IMR-90 (cell line): ENCODE measurements at regions of chr10 and their contacts with region 1.

Region 1: GRCh38 chr10:73339436-73339835 is 19.2 kb downstream of the CFAP70 start:
- DNase-seq: no peak
- ATAC-seq: no peak
- H3K4me3 ChIP-seq: no peak overlapping the region
- H3K27ac ChIP-seq: no peak overlapping the region
- H3K4me1 ChIP-seq: no peaks in the 10 kb centered on the region
- H3K27me3 ChIP-seq: peaks cover 2% of the 10 kb centered on the region; the same call in 1 of the 2 replicates
- CTCF ChIP-seq: no peak
- POLR2A ChIP-seq: no peak
- RAD21 ChIP-seq: no peak

Region 2: DNA sequence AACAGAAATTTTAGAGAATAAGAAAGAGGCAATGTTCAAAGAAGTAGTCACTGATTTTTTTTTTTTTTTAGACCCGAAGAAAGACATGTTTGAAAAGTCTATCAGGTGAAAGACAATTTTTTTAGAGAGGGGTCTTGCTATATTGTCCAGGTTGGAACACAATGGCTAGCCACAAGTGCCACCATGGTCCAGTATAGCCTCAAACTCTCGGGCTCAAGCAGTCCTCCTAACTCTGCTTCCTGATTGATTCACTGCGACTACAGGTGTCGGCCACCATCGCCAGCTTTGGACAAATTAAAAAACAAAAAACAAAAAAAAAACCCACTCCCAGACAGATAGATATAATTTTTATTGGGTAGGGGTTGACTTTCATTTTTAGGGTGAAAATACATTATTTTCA is 149.2 kb before region 1 on chr10:
- CTCF ChIA-PET with region 1: no interaction called
- POLR2A ChIA-PET with region 1: no interaction called
- dilution Hi-C with region 1: no loop called
- in situ Hi-C with region 1: no loop called
- intact Hi-C with region 1: loop called (anchors 10 kb)
- DNase-seq: no peak
- ATAC-seq: no peak
- H3K4me3 ChIP-seq: no peak overlapping the region
- H3K27ac ChIP-seq: no peak overlapping the region
- H3K4me1 ChIP-seq: no peaks in the 10 kb centered on the region
- H3K27me3 ChIP-seq: no peaks in the 10 kb centered on the region
- CTCF ChIP-seq: no peak
- POLR2A ChIP-seq: no peak
- RAD21 ChIP-seq: no peak

Region 3: DNA sequence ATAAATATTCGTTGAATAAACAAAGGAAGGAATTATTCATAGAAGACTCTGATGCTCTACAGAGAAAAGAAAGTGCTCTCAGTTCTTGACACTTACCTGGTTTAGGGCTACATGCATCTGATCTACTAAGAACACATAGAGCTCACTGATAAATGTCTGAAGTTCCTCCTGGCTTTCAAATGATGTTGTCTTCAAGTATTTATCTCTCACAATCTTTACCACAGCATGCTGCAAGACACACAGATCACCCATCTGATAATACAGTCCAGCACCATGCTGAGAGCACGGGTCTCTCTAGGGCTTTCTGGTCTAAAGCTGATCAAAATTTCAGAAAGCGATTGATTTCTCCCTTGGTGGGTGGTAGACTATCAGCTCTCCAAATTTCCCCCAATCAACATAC is 42.5 kb before region 1 on chr10:
- CTCF ChIA-PET with region 1: no interaction called
- POLR2A ChIA-PET with region 1: no interaction called
- dilution Hi-C with region 1: no loop called
- in situ Hi-C with region 1: no loop called
- intact Hi-C with region 1: loop called (anchors 5 kb)
- DNase-seq: no peak
- ATAC-seq: no peak
- H3K4me3 ChIP-seq: no peak overlapping the region
- H3K27ac ChIP-seq: no peak overlapping the region
- H3K4me1 ChIP-seq: no peaks in the 10 kb centered on the region
- H3K27me3 ChIP-seq: peaks cover 13% of the 10 kb centered on the region
- CTCF ChIP-seq: no peak
- POLR2A ChIP-seq: no peak
- RAD21 ChIP-seq: no peak

Region 4: DNA sequence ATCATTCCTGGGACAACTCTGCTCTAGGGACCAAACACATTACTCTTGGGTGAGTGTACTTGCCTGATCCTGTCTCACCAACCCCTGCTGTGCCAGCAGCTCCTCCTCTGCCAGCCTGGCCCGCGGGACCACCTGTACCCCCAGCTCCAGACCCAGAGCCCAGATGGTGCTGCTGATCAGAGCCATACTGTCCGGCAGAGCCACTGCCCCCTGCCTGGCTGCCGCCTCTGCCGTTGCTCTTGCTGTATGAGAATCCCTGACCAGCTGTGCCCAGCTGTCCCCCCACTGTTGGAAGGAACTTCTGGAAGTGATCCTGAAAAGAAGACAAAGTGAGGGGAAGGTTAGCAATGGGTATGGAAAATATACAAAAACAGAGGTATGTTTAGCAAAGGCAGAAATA is 295.0 kb after region 1 on chr10:
- CTCF ChIA-PET with region 1: no interaction called
- POLR2A ChIA-PET with region 1: no interaction called
- dilution Hi-C with region 1: no loop called
- in situ Hi-C with region 1: no loop called
- intact Hi-C with region 1: no loop called
- DNase-seq: no peak
- ATAC-seq: no peak
- H3K4me3 ChIP-seq: no peak overlapping the region
- H3K27ac ChIP-seq: no peak overlapping the region
- H3K4me1 ChIP-seq: no peaks in the 10 kb centered on the region; the same call in 1 of the 2 replicates
- H3K27me3 ChIP-seq: peaks cover 6% of the 10 kb centered on the region; the same call in 1 of the 2 replicates
- CTCF ChIP-seq: no peak
- POLR2A ChIP-seq: no peak
- RAD21 ChIP-seq: no peak

Region 5: DNA sequence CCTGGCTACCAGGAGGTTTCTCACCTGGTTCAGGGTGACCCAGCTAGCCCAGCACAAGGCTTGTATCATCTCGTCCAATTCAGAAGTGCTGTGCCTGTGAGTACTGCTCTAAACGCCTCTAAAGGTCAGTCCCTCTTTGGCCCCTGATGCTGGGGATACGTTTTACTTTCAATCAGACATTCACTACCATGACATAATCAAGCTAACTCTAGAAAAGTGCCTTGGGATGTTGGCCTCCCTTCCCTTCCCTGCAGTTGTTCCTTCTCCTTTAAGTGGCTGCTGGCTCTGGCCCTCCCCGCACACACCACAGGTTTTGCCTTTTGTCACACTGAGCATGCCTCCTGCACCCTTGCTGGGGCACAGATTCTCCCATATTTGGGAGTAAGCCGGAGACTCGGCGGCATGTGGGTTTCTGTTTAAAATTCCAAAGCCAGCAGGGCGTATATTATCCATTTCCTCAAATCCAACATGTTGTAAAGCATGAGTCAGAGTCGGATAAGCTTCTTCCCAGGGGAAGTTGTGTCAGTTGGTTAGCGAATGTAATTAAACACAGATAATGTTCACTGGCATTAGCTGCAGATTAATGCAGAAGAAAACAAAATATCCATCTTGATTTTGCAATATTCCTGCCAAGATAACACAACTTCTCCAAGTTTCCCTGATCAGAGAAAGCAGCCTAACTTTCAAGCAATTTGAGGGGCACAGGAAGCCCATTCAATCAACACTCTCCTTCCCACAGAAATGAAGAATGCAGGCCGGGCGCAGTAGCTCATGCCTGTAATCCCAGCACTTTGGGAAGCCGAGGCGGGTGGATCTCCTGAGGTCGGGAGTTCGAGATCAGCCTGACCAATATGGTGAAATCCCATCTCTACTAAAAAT is 626.7 kb after region 1 on chr10:
- CTCF ChIA-PET with region 1: no interaction called
- POLR2A ChIA-PET with region 1: no interaction called
- dilution Hi-C with region 1: no loop called
- in situ Hi-C with region 1: no loop called
- intact Hi-C with region 1: no loop called
- DNase-seq: peak; percentile 99
- ATAC-seq: peak; percentile 95
- H3K4me3 ChIP-seq: no peak overlapping the region
- H3K27ac ChIP-seq: peak overlapping the region; percentile 96
- H3K4me1 ChIP-seq: peaks cover 22% of the 10 kb centered on the region
- H3K27me3 ChIP-seq: no peaks in the 10 kb centered on the region
- CTCF ChIP-seq: no peak
- POLR2A ChIP-seq: no peak
- RAD21 ChIP-seq: 0 out of 2 replicates have a peak, but pooled peaks have one; percentile 24